Esophagus muscularis mucosa (tissue), 4 donors: ENCODE measurements at regions of chr7 and their contacts with region 1.

Region 1: DNA sequence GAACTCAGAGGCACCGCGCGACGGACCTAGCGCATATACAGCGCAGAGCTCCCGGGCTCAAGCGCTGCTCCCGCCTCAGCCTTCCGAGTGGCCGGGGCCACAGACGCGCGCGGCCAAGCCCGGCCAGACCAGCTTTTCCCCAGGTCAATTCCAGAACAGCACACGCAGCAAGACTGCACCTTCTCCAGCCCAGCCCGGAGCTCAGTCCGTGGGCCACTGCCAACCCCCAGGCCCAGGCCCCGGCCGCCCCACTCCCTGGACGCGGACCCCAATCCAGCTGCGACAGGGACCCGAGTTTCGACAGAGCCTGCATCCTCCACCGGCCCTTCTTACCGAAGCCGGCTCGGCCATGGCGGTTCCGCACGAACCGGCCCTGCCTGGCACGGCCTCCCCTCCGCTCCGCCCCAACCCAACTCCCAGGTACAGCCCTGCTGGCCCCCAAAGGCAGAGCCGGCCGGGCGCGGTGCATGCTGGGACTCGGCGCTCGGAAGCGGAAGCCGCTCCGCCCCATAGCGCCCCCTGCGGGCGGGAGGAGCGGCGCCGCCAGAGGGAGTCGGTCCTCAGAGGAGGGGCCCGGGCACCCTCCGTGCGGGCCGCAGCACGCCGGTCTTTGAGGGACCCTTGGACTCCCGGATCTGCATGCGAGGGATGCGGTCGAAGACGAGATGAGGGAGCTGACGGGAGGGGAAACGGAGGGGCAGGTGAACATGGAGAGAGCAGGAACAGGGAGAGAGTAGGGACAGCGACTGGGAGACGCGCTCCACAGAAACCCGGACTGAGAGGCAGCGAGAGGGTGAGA is at the start of gene ZNF425:
- DNase-seq: peak; percentile 96
- H3K4me3 ChIP-seq: peak within 1 kb of the TSS; percentile 79 to 87 (median 82)
- H3K27ac ChIP-seq: peak within 1 kb of the TSS; percentile 93 to 98 (median 98)
- H3K4me1 ChIP-seq: peaks cover 15 to 21% (median 19%) of the 10 kb centered on the region in 4 donors
- H3K27me3 ChIP-seq: no peaks in the 10 kb centered on the region
- CTCF ChIP-seq: peak in 2 of 3 experiments; percentile 93 to 95
- EP300 ChIP-seq: no peak
- POLR2A ChIP-seq: peak; percentile 89
- total RNA-seq, gene ZNF425: 2.1 to 3.9 (median 3.3) TPM

Region 2: DNA sequence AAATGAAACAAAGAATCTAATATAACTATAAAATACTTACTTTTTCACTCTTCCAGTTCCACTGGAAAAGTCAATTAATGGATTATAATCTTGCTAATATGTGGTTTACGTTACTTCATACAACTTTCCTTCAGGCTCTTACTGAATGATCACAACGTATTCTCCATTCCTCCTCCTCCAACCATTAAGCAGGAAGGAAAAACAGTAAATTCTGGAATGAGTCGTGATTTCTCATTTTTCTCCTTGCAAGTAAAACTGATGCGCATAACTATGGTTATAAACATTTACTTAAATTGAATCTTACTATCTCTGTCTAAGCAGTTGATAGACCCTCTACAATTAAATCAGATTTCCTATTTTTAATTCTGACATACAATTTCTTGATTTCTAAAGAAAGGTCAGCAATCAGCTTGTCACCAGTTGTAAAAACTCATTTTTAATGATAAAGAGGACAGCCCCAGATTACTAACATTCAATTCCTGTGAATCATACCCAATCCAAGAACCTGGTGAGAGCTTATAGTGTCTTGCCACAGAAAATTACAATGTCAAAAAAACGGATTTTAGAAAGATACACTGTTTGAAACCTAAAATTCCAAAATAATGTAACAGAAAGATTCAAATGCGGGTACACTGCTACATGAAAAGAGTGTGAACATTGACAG is 306.2 kb before region 1 on chr7:
- intact Hi-C with region 1: no loop called
- DNase-seq: no peak
- H3K4me3 ChIP-seq: no peak overlapping the region
- H3K27ac ChIP-seq: no peak overlapping the region
- H3K4me1 ChIP-seq: no peaks in the 10 kb centered on the region
- H3K27me3 ChIP-seq: no peaks in the 10 kb centered on the region
- CTCF ChIP-seq: no peak
- EP300 ChIP-seq: no peak
- POLR2A ChIP-seq: no peak

Region 3: DNA sequence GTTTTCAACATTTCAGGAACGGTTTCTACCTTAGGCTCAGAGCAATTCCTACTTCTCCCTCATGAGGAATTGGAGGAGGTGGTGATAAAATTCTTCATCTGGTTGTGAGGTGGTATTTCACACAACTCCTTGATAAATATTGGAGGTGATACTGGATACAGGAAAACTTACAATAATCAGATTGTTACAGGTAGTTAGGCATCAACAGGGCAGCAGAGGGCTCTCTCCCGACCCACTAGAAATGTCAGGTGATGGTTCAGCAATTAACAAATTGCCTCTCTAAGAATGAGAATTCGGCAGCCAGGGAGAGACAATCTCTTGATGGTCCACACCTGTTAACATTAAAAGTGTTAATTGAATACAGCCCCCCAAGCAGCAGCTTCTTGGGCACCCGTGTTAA is 58.2 kb before region 1 on chr7:
- intact Hi-C with region 1: loop called (anchors 1 kb)
- DNase-seq: no peak
- H3K4me3 ChIP-seq: no peak overlapping the region
- H3K27ac ChIP-seq: no peak overlapping the region
- H3K4me1 ChIP-seq: peaks cover 0 to 12% (median 5%) of the 10 kb centered on the region in 4 donors
- H3K27me3 ChIP-seq: no peaks in the 10 kb centered on the region
- CTCF ChIP-seq: no peak
- EP300 ChIP-seq: no peak
- POLR2A ChIP-seq: no peak

Region 4: DNA sequence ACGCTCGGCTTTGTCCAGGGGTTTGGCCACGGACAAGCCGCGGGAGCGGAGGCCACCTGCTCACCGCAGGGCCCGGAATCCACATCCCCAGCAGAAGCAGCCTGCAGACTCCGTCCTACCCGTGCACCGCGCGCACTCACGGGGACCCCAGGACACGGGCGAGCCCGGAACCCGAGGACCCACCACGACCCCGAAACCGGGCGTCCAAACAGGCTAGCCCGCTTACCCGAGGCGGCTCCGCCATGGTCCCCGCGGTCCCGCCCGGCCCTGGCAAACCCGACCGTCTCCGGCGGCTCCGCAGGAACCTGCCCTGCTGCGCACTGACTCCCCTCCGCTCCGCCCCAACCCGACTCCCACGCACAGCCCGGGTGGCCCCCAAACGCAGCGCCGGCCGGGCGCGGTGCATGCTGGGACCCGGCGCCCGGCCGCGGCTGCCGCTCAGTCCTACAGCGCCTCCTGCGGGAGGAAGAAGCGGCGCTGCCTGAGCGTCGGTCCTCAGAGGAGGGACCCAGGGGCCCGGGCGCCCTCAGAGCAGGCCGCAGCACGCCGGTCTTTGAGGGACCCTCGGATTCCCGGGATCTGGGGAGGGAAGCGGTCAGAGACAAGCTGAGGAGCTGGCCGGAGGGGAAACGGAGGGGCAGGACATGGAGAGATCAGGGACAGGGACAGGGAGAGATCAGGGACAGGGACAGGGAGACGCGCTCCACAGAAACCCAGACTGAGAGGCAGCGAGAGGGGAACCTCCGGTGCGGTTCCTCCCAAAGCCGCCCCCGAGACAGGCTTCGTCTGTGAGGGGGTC is 35.5 kb before region 1 on chr7 and contains the start of gene ZNF786:
- intact Hi-C with region 1: loop called (anchors 2 kb)
- DNase-seq: peak; percentile 93
- H3K4me3 ChIP-seq: peak within 1 kb of the TSS; percentile 70 to 99 (median 88)
- H3K27ac ChIP-seq: peak within 1 kb of the TSS; percentile 89 to 97 (median 92)
- H3K4me1 ChIP-seq: peaks cover 9 to 21% (median 19%) of the 10 kb centered on the region in 4 donors
- H3K27me3 ChIP-seq: no peaks in the 10 kb centered on the region
- CTCF ChIP-seq: peak; percentile 93 to 97 (median 93)
- EP300 ChIP-seq: no peak
- POLR2A ChIP-seq: peak; percentile 36
- total RNA-seq, gene ZNF786: 4.5 to 10.7 (median 5.6) TPM

Region 5: GRCh38 chr7:149147072-149147751 is 21.1 kb after region 1 on chr7 and contains the start of gene ZNF398:
- intact Hi-C with region 1: loop called (anchors 2 kb)
- DNase-seq: peak; percentile 92
- H3K4me3 ChIP-seq: peak within 1 kb of the TSS; percentile 82 to 96 (median 92)
- H3K27ac ChIP-seq: peak within 1 kb of the TSS; percentile 88 to 95 (median 94)
- H3K4me1 ChIP-seq: peaks cover 10 to 32% (median 29%) of the 10 kb centered on the region in 4 donors
- H3K27me3 ChIP-seq: no peaks in the 10 kb centered on the region
- CTCF ChIP-seq: peak; percentile 75 to 94 (median 78)
- EP300 ChIP-seq: no peak
- POLR2A ChIP-seq: no peak
- total RNA-seq, gene ZNF398: 16.9 to 22.6 (median 19.2) TPM

Region 6: DNA sequence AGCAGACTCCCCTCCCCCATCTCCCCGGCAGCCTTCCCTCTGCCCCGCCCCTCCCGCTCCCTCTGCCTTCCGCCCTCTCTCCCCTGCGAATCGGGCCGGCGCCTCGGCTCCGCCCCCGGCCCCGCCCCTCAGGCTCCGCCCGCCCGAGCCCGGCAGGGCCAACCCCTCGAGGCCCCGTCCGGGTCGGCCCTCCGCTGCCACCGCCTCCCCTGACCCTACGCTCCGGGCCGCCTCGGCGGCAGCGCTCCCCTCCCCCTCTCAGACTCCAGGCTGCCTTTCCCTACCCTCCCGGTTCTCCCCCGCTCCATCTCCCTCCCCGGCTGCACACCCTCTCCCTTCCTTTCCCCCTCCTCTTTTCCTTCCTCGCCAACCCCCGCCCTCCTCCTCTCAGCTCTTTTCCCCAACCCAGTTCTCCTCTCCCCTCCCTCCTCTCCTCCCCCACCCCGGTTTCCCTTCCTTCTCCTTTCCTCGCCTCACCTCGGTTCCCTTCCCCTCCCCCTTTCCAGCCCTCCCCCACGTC is 645.7 kb after region 1 on chr7:
- intact Hi-C with region 1: loop called (anchors 5 kb)
- DNase-seq: peak; percentile 97
- H3K4me3 ChIP-seq: peak overlapping the region; percentile 76 to 87 (median 78)
- H3K27ac ChIP-seq: peak overlapping the region; percentile 71 to 82 (median 78)
- H3K4me1 ChIP-seq: peaks cover 18 to 53% (median 51%) of the 10 kb centered on the region in 4 donors
- H3K27me3 ChIP-seq: no peaks in the 10 kb centered on the region
- CTCF ChIP-seq: no peak
- EP300 ChIP-seq: no peak
- POLR2A ChIP-seq: no peak